ENCODE measurements at regions of chr17 and their contacts with region 1.

Region 1: GRCh38 chr17:1716076-1716995 is 6.2 kb upstream of the TLCD2 start:
- DNase-seq: peak; percentile 100
- ATAC-seq: peak; percentile 55 to 76
- H3K4me3 ChIP-seq: peak overlapping the region; percentile 87
- H3K27ac ChIP-seq: peak overlapping the region; percentile 95 to 100
- H3K4me1 ChIP-seq: peaks cover 48% of the 10 kb centered on the region
- CTCF ChIP-seq: 0 out of 3 replicates have a peak, but pooled peaks have one; percentile 5
- EP300 ChIP-seq: no peak
- POLR2A ChIP-seq: peak; percentile 97
- RAD21 ChIP-seq: no peak

Region 2: DNA sequence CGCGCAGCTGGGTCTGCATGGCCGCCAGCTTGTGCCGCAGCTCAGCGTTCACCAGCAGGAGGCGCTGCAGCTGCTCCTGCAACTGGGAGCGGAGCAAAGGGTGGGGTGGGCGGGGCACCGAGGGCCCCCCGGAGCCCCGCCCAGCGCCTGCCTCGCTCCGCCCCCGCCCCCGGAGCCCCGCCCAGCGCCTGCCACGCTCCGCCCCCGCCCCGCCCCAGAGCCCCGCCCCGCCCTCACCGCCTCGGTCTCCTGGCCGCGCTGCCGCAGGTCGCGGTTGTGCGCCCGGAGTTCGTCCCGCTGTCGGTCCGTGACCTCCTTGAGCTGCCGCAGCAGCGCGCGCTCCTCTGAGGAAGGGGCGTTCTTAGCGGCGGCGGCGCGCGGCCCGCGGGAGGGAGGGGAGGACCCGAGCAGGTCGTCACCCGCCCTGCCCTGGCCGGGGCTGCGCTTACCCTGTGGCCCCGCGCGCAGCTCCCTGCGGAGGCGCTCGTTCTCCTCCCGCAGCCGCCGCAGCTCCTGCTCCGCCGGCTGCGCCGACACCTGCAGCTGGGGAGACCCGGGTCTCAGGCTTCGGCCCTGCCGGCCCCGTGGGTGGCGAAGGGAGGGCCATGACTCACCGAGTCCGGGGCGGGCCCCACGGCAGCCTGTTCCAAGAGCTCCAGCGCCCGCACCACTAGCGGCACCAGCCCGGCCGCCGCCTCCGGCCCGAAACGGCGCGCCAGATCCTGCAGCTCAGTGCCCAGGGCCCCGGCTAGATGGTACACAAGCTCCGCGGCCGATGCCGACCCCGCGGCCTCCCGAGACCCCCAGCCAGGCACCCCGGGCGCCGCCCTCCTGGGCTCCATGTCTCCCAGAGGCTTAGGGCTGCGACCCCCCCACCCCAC is 67.1 kb before region 1 on chr17:
- CTCF ChIA-PET with region 1: interaction called, 19 read pairs
- POLR2A ChIA-PET with region 1: interaction called, 43 read pairs
- DNase-seq: peak; percentile 88 to 97
- ATAC-seq: peak; percentile 61 to 74
- H3K4me3 ChIP-seq: peak overlapping the region; percentile 54
- H3K27ac ChIP-seq: peak overlapping the region; percentile 85 to 89
- H3K4me1 ChIP-seq: peaks cover 30% of the 10 kb centered on the region
- CTCF ChIP-seq: peak; percentile 99
- EP300 ChIP-seq: no peak
- POLR2A ChIP-seq: peak; percentile 85
- RAD21 ChIP-seq: peak; percentile 65 to 86

Region 3: GRCh38 chr17:1730328-1731193 is 14.2 kb after region 1 on chr17:
- CTCF ChIA-PET with region 1: interaction called, 72 read pairs
- POLR2A ChIA-PET with region 1: interaction called, 10 read pairs
- DNase-seq: no peak
- ATAC-seq: peak; percentile 30 to 40; a peak in 4 of 6 replicates
- H3K4me3 ChIP-seq: no peak overlapping the region
- H3K27ac ChIP-seq: peak overlapping the region; percentile 18 to 21; a peak in 1 of 6 replicates
- H3K4me1 ChIP-seq: peaks cover 9% of the 10 kb centered on the region
- CTCF ChIP-seq: no peak
- EP300 ChIP-seq: no peak
- POLR2A ChIP-seq: no peak
- RAD21 ChIP-seq: no peak

Region 4: DNA sequence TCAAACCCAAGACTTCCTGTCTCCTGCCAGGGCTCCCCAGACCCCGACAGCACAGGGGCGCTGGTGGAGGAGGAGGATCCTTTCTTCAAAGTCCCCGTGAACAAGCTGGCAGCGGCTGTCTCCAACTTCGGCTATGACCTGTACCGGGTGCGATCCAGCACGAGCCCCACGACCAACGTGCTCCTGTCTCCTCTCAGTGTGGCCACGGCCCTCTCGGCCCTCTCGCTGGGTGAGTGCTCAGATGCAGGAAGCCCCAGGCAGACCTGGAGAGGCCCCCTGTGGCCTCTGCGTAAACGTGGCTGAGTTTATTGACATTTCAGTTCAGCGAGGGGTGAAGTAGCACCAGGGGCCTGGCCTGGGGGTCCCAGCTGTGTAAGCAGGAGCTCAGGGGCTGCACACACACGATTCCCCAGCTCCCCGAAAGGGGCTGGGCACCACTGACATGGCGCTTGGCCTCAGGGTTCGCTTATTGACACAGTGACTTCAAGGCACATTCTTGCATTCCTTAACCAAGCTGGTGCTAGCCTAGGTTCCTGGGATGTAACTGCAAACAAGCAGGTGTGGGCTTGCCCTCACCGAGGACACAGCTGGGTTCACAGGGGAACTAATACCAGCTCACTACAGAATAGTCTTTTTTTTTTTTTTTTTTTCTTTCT is 53.6 kb after region 1 on chr17:
- CTCF ChIA-PET with region 1: interaction called, 591 read pairs
- POLR2A ChIA-PET with region 1: interaction called, 10 read pairs
- DNase-seq: peak; percentile 61 to 78
- ATAC-seq: peak; percentile 79
- H3K4me3 ChIP-seq: no peak overlapping the region
- H3K27ac ChIP-seq: peak overlapping the region; percentile 60 to 83
- H3K4me1 ChIP-seq: peaks cover 11% of the 10 kb centered on the region
- CTCF ChIP-seq: no peak
- EP300 ChIP-seq: no peak
- POLR2A ChIP-seq: no peak
- RAD21 ChIP-seq: no peak

Region 5: DNA sequence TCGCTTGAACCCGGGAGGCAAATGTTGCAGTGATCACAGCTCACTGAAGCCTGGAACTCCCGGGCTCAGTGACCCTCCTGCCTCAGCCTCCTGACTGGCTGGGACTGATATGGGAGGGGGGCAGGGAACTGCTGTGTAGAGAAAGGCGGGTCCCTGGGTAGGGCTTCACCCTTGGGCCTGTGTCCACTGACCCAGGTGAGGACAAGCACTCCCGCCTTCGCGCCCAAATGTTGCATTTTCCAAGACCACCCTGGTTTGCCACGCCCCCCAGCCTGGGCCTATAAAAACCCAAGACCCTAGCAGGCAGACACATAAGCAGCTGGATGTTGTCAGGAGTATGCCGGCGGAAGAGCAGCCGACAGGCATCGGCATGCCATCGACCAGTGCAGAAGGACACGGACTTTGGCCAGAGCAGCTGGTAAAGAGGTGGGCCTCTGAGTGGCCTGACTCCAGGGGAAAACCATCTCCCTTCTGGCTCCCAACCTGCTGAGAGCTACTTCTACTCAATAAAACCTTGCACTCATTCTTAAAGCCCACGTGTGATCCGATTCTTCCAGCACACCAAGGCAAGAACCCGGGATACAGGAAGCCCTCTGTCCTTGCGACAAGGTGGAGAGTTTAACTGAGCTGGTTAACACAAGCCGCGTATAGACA is 94.2 kb after region 1 on chr17:
- CTCF ChIA-PET with region 1: interaction called, 10 read pairs
- POLR2A ChIA-PET with region 1: interaction called, 3 read pairs
- DNase-seq: no peak
- ATAC-seq: no peak
- H3K4me3 ChIP-seq: no peak overlapping the region
- H3K27ac ChIP-seq: no peak overlapping the region
- H3K4me1 ChIP-seq: peaks cover 12% of the 10 kb centered on the region; the same call in 1 of the 3 replicates
- CTCF ChIP-seq: no peak
- EP300 ChIP-seq: no peak
- POLR2A ChIP-seq: no peak
- RAD21 ChIP-seq: no peak

Region 6: GRCh38 chr17:2029911-2030778 is 313.8 kb after region 1 on chr17 and contains the start of gene DPH1:
- CTCF ChIA-PET with region 1: interaction called, 11 read pairs
- POLR2A ChIA-PET with region 1: interaction called, 5 read pairs
- DNase-seq: peak; percentile 91 to 99
- ATAC-seq: peak; percentile 83 to 93
- H3K4me3 ChIP-seq: peak within 1 kb of the TSS; percentile 80
- H3K27ac ChIP-seq: peak within 1 kb of the TSS; percentile 71 to 90
- H3K4me1 ChIP-seq: peaks cover 19% of the 10 kb centered on the region
- CTCF ChIP-seq: no peak
- EP300 ChIP-seq: no peak
- POLR2A ChIP-seq: peak; percentile 64
- RAD21 ChIP-seq: peak in 1 of 2 experiments; percentile 9; a peak in 3 of 5 replicates
- polyA plus RNA-seq, gene DPH1: 25.5 and 33.0 TPM in 2 replicates